PC-9 (cell line): ENCODE measurements at regions of chr4 and their contacts with region 1.

Region 1: DNA sequence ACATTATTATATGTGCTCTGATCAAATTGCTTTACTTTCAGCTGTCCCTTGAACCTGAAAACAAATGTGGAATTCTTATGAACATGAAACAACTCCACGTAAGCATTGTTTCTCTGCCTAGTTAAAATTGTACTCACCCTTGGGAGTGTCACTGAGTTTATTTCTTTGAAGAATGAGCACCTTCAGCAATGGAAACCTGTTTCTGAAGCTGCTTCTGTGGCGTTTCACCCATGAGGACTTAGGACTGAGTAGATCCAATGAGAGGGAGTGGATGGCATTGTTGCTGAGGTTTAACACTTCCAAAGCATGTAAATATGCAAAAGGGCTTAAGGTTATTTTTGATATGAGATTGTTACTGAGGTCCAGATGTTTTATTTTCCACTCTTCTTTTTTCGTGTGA is 3.2 kb downstream of the LRRC66 start:
- DNase-seq: no peak
- H3K4me3 ChIP-seq: no peak overlapping the region
- H3K27ac ChIP-seq: no peak overlapping the region
- H3K4me1 ChIP-seq: no peaks in the 10 kb centered on the region; the same call in 1 of the 2 replicates
- H3K27me3 ChIP-seq: no peaks in the 10 kb centered on the region
- CTCF ChIP-seq: no peak

Region 2: GRCh38 chr4:51895813-51896408 is 121.1 kb before region 1 on chr4:
- CTCF ChIA-PET with region 1: interaction called, 14 read pairs
- POLR2A ChIA-PET with region 1: no interaction called
- intact Hi-C with region 1: no loop called
- DNase-seq: peak in 1 of 2 experiments; percentile 33
- H3K4me3 ChIP-seq: no peak overlapping the region
- H3K27ac ChIP-seq: 0 out of 2 replicates have a peak overlapping the region, but pooled peaks have one; percentile 41
- H3K4me1 ChIP-seq: no peaks in the 10 kb centered on the region
- H3K27me3 ChIP-seq: no peaks in the 10 kb centered on the region
- CTCF ChIP-seq: peak; percentile 80